Caco-2 (cell line): ENCODE measurements at regions of chr11 and their contacts with region 1.

Region 1: GRCh38 chr11:9906043-9906791 is 242.3 kb downstream of the SWAP70 start:
- DNase-seq: peak; percentile 83 to 88
- H3K4me3 ChIP-seq: no peak overlapping the region
- H3K4me3 Mint-ChIP-seq: peak overlapping the region; percentile 51
- H3K27ac Mint-ChIP-seq: peak overlapping the region; percentile 85
- H3K4me1 ChIP-seq: peaks cover 57% of the 10 kb centered on the region
- H3K4me1 Mint-ChIP-seq: peaks cover 33% of the 10 kb centered on the region
- H3K27me3 ChIP-seq: no peaks in the 10 kb centered on the region
- H3K27me3 Mint-ChIP-seq: no peaks in the 10 kb centered on the region
- CTCF ChIP-seq: no peak

Region 2: DNA sequence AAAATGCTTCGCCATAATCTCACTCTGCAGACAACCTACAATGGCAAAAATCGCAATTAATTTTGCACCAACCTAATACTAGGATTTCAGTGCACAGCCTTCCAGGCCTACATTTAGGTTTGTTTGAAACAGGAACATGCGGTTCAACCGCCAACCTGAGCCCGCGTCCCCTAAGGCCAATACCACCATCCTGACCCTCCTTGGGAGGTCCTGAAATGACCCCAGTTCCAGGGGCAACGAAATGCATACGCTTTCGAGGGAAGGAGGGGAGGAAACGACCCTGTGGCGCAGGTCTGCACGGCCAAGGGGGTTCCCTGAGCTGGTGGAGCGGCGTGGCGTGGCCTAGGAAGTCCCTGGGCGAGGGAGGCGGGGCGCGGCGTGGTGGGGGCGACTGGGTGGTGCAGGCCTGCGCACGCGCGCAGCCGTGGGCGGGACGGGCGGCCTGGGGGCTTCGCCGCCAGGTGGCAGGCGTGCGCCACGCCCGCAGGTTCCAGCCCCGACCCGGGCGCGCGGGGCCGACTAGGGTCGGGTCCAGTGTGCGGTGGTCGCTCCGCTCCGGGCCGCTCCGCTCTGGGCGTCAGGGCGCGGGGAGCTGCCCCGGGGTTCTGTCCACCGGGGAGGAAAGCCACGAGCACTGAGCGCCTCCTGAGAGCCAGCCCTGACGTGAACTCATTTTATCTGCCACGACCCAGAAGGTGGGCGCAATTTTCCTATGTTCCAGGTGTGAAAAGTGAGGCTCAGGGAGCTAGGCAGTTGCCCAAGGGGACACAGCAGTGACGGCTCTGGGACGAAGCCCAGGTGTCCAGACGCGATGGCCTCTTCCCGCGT is 148.2 kb before region 1 on chr11:
- CTCF ChIA-PET with region 1: no interaction called
- POLR2A ChIA-PET with region 1: no interaction called
- intact Hi-C with region 1: loop called (anchors 2 kb)
- DNase-seq: peak; percentile 88 to 93
- H3K4me3 ChIP-seq: peak overlapping the region; percentile 70
- H3K4me3 Mint-ChIP-seq: peak overlapping the region; percentile 86
- H3K27ac Mint-ChIP-seq: peak overlapping the region; percentile 68
- H3K4me1 ChIP-seq: peaks cover 13% of the 10 kb centered on the region
- H3K4me1 Mint-ChIP-seq: peaks cover 32% of the 10 kb centered on the region
- H3K27me3 ChIP-seq: no peaks in the 10 kb centered on the region
- H3K27me3 Mint-ChIP-seq: no peaks in the 10 kb centered on the region
- CTCF ChIP-seq: peak; percentile 43 to 79

Region 3: DNA sequence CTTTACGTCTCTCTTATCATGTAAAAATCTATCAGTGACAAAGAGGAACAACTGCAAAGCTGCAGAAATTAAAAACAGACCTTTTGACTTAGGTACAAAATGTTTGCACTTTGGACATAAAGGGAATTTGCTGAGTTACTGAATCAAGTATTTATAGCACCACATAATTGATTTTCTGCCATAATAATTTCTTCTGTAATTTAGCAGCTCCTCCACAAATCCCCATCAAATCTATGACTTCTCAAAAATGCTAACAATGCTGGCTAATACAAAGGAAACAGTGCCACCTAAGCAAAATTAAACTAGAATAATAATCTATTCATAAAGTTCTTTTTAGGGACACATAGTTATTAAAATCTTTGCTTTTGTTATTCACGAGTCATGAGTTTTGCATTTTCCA is 27.3 kb before region 1 on chr11:
- CTCF ChIA-PET with region 1: interaction called, 3 read pairs
- POLR2A ChIA-PET with region 1: no interaction called
- intact Hi-C with region 1: loop called (anchors 1 kb)
- DNase-seq: no peak
- H3K4me3 ChIP-seq: no peak overlapping the region
- H3K4me3 Mint-ChIP-seq: peak overlapping the region; percentile 5
- H3K27ac Mint-ChIP-seq: peak overlapping the region; percentile 28
- H3K4me1 ChIP-seq: peaks cover 43% of the 10 kb centered on the region
- H3K4me1 Mint-ChIP-seq: peaks cover 32% of the 10 kb centered on the region
- H3K27me3 ChIP-seq: no peaks in the 10 kb centered on the region
- H3K27me3 Mint-ChIP-seq: no peaks in the 10 kb centered on the region
- CTCF ChIP-seq: no peak

Region 4: GRCh38 chr11:9951714-9952275 is 45.6 kb after region 1 on chr11:
- CTCF ChIA-PET with region 1: no interaction called
- POLR2A ChIA-PET with region 1: no interaction called
- intact Hi-C with region 1: loop called (anchors 5 kb)
- DNase-seq: no peak
- H3K4me3 ChIP-seq: no peak overlapping the region
- H3K4me3 Mint-ChIP-seq: no peak overlapping the region
- H3K27ac Mint-ChIP-seq: peak overlapping the region; percentile 10
- H3K4me1 ChIP-seq: peaks cover 28% of the 10 kb centered on the region
- H3K4me1 Mint-ChIP-seq: peaks cover 30% of the 10 kb centered on the region
- H3K27me3 ChIP-seq: no peaks in the 10 kb centered on the region
- H3K27me3 Mint-ChIP-seq: no peaks in the 10 kb centered on the region
- CTCF ChIP-seq: no peak

Region 5: DNA sequence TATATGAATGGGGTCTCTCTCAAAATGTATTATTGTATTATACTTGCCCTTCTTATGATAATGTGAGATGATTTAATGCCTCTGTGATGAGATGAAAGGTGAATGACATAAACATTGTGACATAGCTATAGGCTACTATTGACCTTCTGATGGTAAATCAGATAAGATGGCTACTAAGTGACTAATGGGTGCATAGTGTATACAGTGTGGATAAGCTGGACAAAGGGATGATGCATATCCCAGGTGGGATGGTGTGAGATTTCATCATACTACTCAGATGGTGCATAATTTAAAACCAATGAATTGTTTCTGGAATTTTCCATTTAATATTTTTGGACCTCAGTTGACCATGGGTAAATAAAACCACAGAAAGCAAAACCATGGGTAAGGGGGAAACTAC is 144.3 kb after region 1 on chr11:
- CTCF ChIA-PET with region 1: no interaction called
- POLR2A ChIA-PET with region 1: no interaction called
- intact Hi-C with region 1: loop called (anchors 5 kb)
- DNase-seq: peak; percentile 57 to 72
- H3K4me3 ChIP-seq: no peak overlapping the region
- H3K4me3 Mint-ChIP-seq: no peak overlapping the region
- H3K27ac Mint-ChIP-seq: peak overlapping the region; percentile 76
- H3K4me1 ChIP-seq: peaks cover 38% of the 10 kb centered on the region
- H3K4me1 Mint-ChIP-seq: peaks cover 19% of the 10 kb centered on the region
- H3K27me3 ChIP-seq: no peaks in the 10 kb centered on the region
- H3K27me3 Mint-ChIP-seq: no peaks in the 10 kb centered on the region
- CTCF ChIP-seq: no peak

Region 6: GRCh38 chr11:10122326-10123197 is 216.3 kb after region 1 on chr11:
- CTCF ChIA-PET with region 1: no interaction called
- POLR2A ChIA-PET with region 1: no interaction called
- intact Hi-C with region 1: no loop called
- DNase-seq: no peak
- H3K4me3 ChIP-seq: no peak overlapping the region
- H3K4me3 Mint-ChIP-seq: no peak overlapping the region
- H3K27ac Mint-ChIP-seq: no peak overlapping the region
- H3K4me1 ChIP-seq: peaks cover 5% of the 10 kb centered on the region
- H3K4me1 Mint-ChIP-seq: peaks cover 7% of the 10 kb centered on the region
- H3K27me3 ChIP-seq: no peaks in the 10 kb centered on the region
- H3K27me3 Mint-ChIP-seq: no peaks in the 10 kb centered on the region
- CTCF ChIP-seq: no peak

Region 7: GRCh38 chr11:10394229-10395101 is 488.2 kb after region 1 on chr11:
- CTCF ChIA-PET with region 1: no interaction called
- POLR2A ChIA-PET with region 1: no interaction called
- intact Hi-C with region 1: loop called (anchors 2 kb)
- DNase-seq: peak; percentile 84 to 93
- H3K4me3 ChIP-seq: no peak overlapping the region
- H3K4me3 Mint-ChIP-seq: peak overlapping the region; percentile 57
- H3K27ac Mint-ChIP-seq: peak overlapping the region; percentile 80
- H3K4me1 ChIP-seq: peaks cover 66% of the 10 kb centered on the region
- H3K4me1 Mint-ChIP-seq: peaks cover 66% of the 10 kb centered on the region
- H3K27me3 ChIP-seq: no peaks in the 10 kb centered on the region
- H3K27me3 Mint-ChIP-seq: no peaks in the 10 kb centered on the region
- CTCF ChIP-seq: no peak